Common myeloid progenitor, CD34-positive (primary cell): ENCODE measurements at regions of chr17 and their contacts with region 1.

Region 1: GRCh38 chr17:27654654-27655524 is 23.9 kb downstream of the LGALS9 start:
- DNase-seq: peak; percentile 79 to 87 (median 85)
- H3K4me3 ChIP-seq: no peak overlapping the region
- H3K27ac ChIP-seq: no peak overlapping the region
- H3K4me1 ChIP-seq: peaks cover 0 to 3% (median under 1%) of the 10 kb centered on the region in 4 experiments
- H3K27me3 ChIP-seq: peaks cover 0 to 1% (median 0%) of the 10 kb centered on the region in 5 experiments

Region 2: DNA sequence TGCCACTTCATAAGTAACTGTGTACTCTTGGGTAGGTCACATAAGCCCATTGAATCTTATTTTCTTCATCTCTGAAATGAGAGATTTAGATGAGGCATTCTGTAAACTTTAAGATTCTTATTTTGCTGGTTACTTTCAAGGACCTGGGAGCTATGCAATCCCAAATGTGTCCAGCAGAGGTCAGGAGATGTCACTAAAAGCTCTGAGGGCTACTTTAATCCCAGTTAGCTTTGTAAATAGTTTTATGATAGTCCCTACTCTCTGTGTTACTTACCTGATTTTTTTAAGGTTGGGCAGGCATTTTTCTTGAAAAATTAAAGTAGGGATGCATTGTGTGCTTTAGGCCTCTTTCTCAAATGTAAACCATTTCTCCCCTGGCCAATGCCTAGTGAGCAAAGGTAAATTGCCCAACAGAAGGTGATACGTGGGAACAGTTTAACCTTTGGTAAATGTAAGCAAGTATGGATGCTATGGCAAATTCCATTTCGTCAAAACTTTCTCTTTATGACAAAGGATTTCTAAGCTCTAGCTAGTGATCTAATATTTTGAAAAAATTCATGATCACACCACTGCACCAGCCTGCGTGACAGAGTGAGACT is 418.1 kb before region 1 on chr17:
- CTCF ChIA-PET with region 1: interaction called, 22 read pairs
- POLR2A ChIA-PET with region 1: no interaction called
- DNase-seq: peak; percentile 78 to 89 (median 81)
- H3K4me3 ChIP-seq: no peak overlapping the region
- H3K27ac ChIP-seq: no peak overlapping the region
- H3K4me1 ChIP-seq: peaks cover 0 to 7% (median under 1%) of the 10 kb centered on the region in 4 experiments
- H3K27me3 ChIP-seq: no peaks in the 10 kb centered on the region

Region 3: GRCh38 chr17:27609611-27610303 is 45.1 kb before region 1 on chr17:
- CTCF ChIA-PET with region 1: interaction called, 102 read pairs
- POLR2A ChIA-PET with region 1: interaction called, 5 read pairs
- DNase-seq: peak; percentile 36 to 66 (median 60)
- H3K4me3 ChIP-seq: no peak overlapping the region
- H3K27ac ChIP-seq: no peak overlapping the region
- H3K4me1 ChIP-seq: no peaks in the 10 kb centered on the region
- H3K27me3 ChIP-seq: no peaks in the 10 kb centered on the region

Region 4: DNA sequence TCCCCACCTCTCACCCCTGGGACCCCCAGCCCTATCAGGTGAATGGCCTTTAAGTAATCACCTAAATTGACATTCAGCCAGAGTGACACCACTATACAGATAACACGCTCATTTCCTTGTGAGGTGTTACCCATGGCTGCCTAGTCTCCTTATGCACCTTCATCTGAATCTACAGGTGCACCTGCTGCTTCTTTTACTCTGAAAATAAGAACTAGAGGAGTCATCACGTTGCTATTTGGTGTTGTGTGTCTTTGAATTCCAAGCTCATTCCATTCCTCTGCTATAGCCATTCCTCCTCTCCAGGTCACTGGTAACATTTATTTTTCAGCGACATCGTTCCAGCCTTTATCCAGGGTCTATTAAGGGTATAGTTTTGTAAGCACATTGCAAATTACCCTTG is 14.1 kb before region 1 on chr17:
- CTCF ChIA-PET with region 1: interaction called, 12 read pairs
- POLR2A ChIA-PET with region 1: no interaction called
- DNase-seq: no peak
- H3K4me3 ChIP-seq: no peak overlapping the region
- H3K27ac ChIP-seq: no peak overlapping the region
- H3K4me1 ChIP-seq: peaks cover 0 to 6% (median 4%) of the 10 kb centered on the region in 4 experiments
- H3K27me3 ChIP-seq: no peaks in the 10 kb centered on the region

Region 5: GRCh38 chr17:27665549-27665948 is 10.7 kb after region 1 on chr17:
- CTCF ChIA-PET with region 1: interaction called, 20 read pairs
- POLR2A ChIA-PET with region 1: no interaction called
- DNase-seq: no peak
- H3K4me3 ChIP-seq: no peak overlapping the region
- H3K27ac ChIP-seq: no peak overlapping the region
- H3K4me1 ChIP-seq: no peaks in the 10 kb centered on the region
- H3K27me3 ChIP-seq: peaks cover 0 to 2% (median 0%) of the 10 kb centered on the region in 5 experiments

Region 6: GRCh38 chr17:27760069-27760885 is 105.4 kb after region 1 on chr17:
- CTCF ChIA-PET with region 1: interaction called, 97 read pairs
- POLR2A ChIA-PET with region 1: no interaction called
- DNase-seq: peak; percentile 40 to 67 (median 57)
- H3K4me3 ChIP-seq: no peak overlapping the region
- H3K27ac ChIP-seq: no peak overlapping the region
- H3K4me1 ChIP-seq: no peaks in the 10 kb centered on the region
- H3K27me3 ChIP-seq: peaks cover 0 to 1% (median 0%) of the 10 kb centered on the region in 5 experiments